A673 (cell line): ENCODE measurements at regions of chr2 and their contacts with region 1.

Region 1: GRCh38 chr2:149017116-149017985 is 21.1 kb upstream of the LYPD6B start:
- DNase-seq: peak; percentile 84
- H3K4me3 ChIP-seq: no peak overlapping the region
- H3K27ac ChIP-seq: no peak overlapping the region
- H3K4me1 ChIP-seq: no peaks in the 10 kb centered on the region
- H3K27me3 ChIP-seq: no peaks in the 10 kb centered on the region
- CTCF ChIP-seq: peak; percentile 92

Region 2: GRCh38 chr2:148483666-148484065 is 533.7 kb before region 1 on chr2:
- CTCF ChIA-PET with region 1: interaction called, 16 read pairs
- POLR2A ChIA-PET with region 1: no interaction called
- intact Hi-C with region 1: no loop called
- DNase-seq: no peak
- H3K4me3 ChIP-seq: no peak overlapping the region
- H3K27ac ChIP-seq: no peak overlapping the region
- H3K4me1 ChIP-seq: no peaks in the 10 kb centered on the region
- H3K27me3 ChIP-seq: no peaks in the 10 kb centered on the region
- CTCF ChIP-seq: no peak

Region 3: GRCh38 chr2:149313512-149313972 is 296.2 kb after region 1 on chr2:
- CTCF ChIA-PET with region 1: interaction called, 9 read pairs
- POLR2A ChIA-PET with region 1: no interaction called
- intact Hi-C with region 1: loop called (anchors 2 kb)
- DNase-seq: peak; percentile 74
- H3K4me3 ChIP-seq: no peak overlapping the region
- H3K27ac ChIP-seq: no peak overlapping the region
- H3K4me1 ChIP-seq: peaks cover 6% of the 10 kb centered on the region
- H3K27me3 ChIP-seq: no peaks in the 10 kb centered on the region
- CTCF ChIP-seq: peak; percentile 81

Region 4: GRCh38 chr2:149435598-149435997 is 418.2 kb after region 1 on chr2:
- CTCF ChIA-PET with region 1: interaction called, 12 read pairs
- POLR2A ChIA-PET with region 1: no interaction called
- intact Hi-C with region 1: no loop called
- DNase-seq: no peak
- H3K4me3 ChIP-seq: no peak overlapping the region
- H3K27ac ChIP-seq: no peak overlapping the region
- H3K4me1 ChIP-seq: no peaks in the 10 kb centered on the region
- H3K27me3 ChIP-seq: no peaks in the 10 kb centered on the region
- CTCF ChIP-seq: peak; percentile 39; the same call in 1 of the 2 replicates

Region 5: DNA sequence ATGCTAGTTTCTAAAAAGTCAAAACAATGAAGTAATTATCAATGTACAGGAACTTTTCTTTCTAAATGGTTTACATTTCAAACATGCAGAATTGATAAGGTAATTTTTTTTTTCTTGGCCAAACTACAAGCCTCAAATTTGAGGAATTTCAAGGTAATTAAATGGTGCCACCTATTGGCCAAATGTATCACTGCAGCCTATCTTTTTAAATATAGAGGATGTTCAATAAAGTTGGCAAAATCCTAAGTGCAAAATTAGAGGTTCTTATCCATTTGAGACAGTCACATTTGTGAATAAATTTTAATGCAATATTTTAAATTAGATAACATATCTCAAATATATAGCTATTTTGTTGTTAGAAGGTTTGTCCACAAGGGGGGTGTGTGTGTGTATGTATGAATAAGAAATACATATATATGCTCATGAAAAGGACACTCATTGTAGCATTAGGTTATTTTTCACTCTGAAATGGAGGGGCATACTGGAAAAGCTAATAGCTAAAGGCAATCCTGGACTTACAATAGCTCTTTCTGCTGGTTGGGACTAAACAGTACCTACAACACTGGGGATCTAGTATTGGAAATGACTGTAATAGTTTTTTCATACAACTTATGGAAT is 544.1 kb after region 1 on chr2:
- CTCF ChIA-PET with region 1: interaction called, 9 read pairs
- POLR2A ChIA-PET with region 1: no interaction called
- intact Hi-C with region 1: loop called (anchors 1 kb)
- DNase-seq: peak; percentile 57
- H3K4me3 ChIP-seq: no peak overlapping the region
- H3K27ac ChIP-seq: no peak overlapping the region
- H3K4me1 ChIP-seq: no peaks in the 10 kb centered on the region
- H3K27me3 ChIP-seq: no peaks in the 10 kb centered on the region
- CTCF ChIP-seq: peak; percentile 93